Activated CD4-positive, alpha-beta T cell treated with anti-CD3 and anti-CD28 coated beads for 36 hours (primary cell): ENCODE measurements at regions of chr2 and their contacts with region 1.

Region 1: DNA sequence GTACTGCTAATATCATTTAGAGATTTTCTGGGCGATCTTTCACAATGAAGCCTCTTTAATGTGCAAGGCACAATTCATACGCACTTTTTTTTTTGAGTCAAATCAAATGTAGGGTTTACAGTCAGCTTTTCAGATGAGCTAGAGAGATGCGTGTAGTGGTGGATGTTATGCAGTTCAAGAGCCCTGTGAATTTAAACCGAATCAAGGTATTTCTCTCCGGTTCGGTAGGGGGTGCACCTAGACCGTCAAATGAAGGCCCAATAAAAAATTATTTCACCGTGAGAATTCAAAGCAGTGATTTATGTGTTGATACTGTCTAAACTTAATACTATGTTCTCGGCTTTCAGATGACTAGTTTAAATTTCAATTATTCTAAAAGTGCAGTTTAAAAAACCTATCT is 1.1 kb downstream of the PTH2R start:
- DNase-seq: peak; percentile 27
- ATAC-seq: no peak
- H3K4me3 Mint-ChIP-seq: no peak overlapping the region
- H3K27ac Mint-ChIP-seq: no peak overlapping the region
- H3K4me1 Mint-ChIP-seq: peaks cover 9% of the 10 kb centered on the region
- H3K27me3 Mint-ChIP-seq: peaks cover 46% of the 10 kb centered on the region

Region 2: GRCh38 chr2:208142240-208142924 is 265.3 kb before region 1 on chr2:
- CTCF ChIA-PET with region 1: no interaction called
- POLR2A ChIA-PET with region 1: no interaction called
- intact Hi-C with region 1: no loop called
- DNase-seq: no peak
- ATAC-seq: no peak
- H3K4me3 Mint-ChIP-seq: no peak overlapping the region
- H3K27ac Mint-ChIP-seq: no peak overlapping the region
- H3K4me1 Mint-ChIP-seq: no peaks in the 10 kb centered on the region
- H3K27me3 Mint-ChIP-seq: no peaks in the 10 kb centered on the region

Region 3: GRCh38 chr2:209322041-209322440 is 914.4 kb after region 1 on chr2:
- CTCF ChIA-PET with region 1: no interaction called
- POLR2A ChIA-PET with region 1: no interaction called
- intact Hi-C with region 1: loop called in 1 of 2 experiments (anchors 10 kb)
- DNase-seq: no peak
- ATAC-seq: no peak
- H3K4me3 Mint-ChIP-seq: no peak overlapping the region
- H3K27ac Mint-ChIP-seq: no peak overlapping the region
- H3K4me1 Mint-ChIP-seq: no peaks in the 10 kb centered on the region
- H3K27me3 Mint-ChIP-seq: no peaks in the 10 kb centered on the region

Region 4: GRCh38 chr2:209423562-209424198 is 1016.0 kb after region 1 on chr2 and contains the start of gene MAP2:
- CTCF ChIA-PET with region 1: no interaction called
- POLR2A ChIA-PET with region 1: no interaction called
- intact Hi-C with region 1: loop called in 1 of 2 experiments (anchors 10 kb)
- DNase-seq: peak; percentile 87
- ATAC-seq: peak; percentile 98
- H3K4me3 Mint-ChIP-seq: peak within 1 kb of the TSS; percentile 67
- H3K27ac Mint-ChIP-seq: no peak within 1 kb of the TSS
- H3K4me1 Mint-ChIP-seq: peaks cover 10% of the 10 kb centered on the region
- H3K27me3 Mint-ChIP-seq: peaks cover 32% of the 10 kb centered on the region
- total RNA-seq, gene MAP2: 0.34 to 0.39 TPM